ENCODE measurements at regions of chr6 and their contacts with region 1.

Region 1: GRCh38 chr6:33585403-33586107 is 5.5 kb upstream of the BAK1 start:
- DNase-seq: peak; percentile 84 to 94 (median 91)
- ATAC-seq: peak; percentile 65 to 78
- H3K4me3 ChIP-seq: no peak overlapping the region
- H3K27ac ChIP-seq: no peak overlapping the region
- H3K4me1 ChIP-seq: peaks cover 1% of the 10 kb centered on the region
- H3K27me3 ChIP-seq: no peaks in the 10 kb centered on the region

Region 2: DNA sequence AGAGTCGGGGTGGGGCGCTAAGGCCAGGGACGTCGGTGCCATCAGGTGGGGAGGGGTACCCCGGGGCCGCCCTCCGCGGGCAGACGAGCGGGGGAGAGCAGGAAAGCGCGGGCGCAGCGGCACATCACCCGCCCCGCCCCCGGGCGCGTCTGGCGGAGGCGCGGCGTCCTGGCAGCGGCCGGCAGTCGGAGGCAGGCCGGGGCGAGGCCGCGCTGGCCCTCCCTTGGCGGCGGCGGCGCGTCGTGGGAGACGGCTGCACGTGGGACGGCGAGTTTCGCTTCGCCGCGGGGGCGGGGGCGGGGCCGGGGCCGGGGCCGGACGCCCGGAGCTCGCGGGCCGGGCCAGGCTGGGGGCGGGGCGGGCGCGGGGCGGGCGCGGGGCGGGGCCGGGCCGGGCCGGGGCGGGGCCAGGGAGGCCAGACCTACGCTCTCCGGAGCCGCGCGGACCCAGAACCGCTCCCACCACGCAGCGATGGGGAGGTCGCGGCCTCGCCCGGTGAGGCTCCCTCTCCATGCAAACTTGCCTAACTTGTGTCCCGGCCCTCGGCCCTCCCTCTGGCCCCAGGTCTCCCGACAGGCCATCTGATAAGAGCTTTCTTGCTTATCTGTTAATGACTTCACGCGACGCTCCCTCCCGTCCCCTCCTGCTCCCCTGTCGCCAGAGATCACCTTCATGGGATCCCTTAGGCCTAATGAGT is 48.1 kb after region 1 on chr6:
- intact Hi-C with region 1: loop called in 3 of 4 experiments (anchors 5 to 10 kb)
- DNase-seq: peak; percentile 82 to 93 (median 93)
- ATAC-seq: peak; percentile 82 to 85
- H3K4me3 ChIP-seq: peak overlapping the region; percentile 27
- H3K27ac ChIP-seq: peak overlapping the region; percentile 9
- H3K4me1 ChIP-seq: no peaks in the 10 kb centered on the region
- H3K27me3 ChIP-seq: no peaks in the 10 kb centered on the region

Region 3: GRCh38 chr6:33672808-33673207 is 87.3 kb after region 1 on chr6:
- intact Hi-C with region 1: loop called in 2 of 4 experiments (anchors 5 to 10 kb)
- DNase-seq: peak; percentile 92 to 96 (median 94)
- ATAC-seq: peak; percentile 91 to 95
- H3K4me3 ChIP-seq: no peak overlapping the region
- H3K27ac ChIP-seq: no peak overlapping the region
- H3K4me1 ChIP-seq: no peaks in the 10 kb centered on the region
- H3K27me3 ChIP-seq: no peaks in the 10 kb centered on the region

Region 4: DNA sequence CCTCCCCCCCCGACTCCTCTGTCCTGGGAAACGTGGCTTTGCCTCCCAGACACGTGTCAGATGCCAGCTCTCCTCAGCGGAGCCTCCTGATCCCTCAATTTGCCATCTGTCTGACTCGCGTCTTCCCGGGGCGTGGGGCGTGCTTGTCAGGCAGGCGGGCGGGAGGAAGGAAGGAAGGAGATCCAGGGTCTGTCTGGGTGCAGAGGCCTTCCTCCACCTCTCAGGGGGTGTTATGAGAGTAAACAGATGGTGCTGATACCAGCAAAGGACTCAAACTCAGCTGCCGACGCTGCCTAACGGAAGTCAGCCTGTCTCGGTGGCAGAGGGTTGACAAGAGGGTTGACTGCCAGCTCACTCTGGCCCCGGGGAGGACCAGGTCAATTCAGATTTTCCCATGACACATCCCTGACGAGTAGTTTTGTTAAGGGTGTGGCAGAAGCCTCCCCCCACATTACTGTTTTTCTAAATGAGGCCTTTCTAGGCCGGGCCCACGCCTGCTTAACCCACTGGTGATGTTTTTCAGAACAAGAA is 108.9 kb after region 1 on chr6:
- intact Hi-C with region 1: loop called in 3 of 4 experiments (anchors 2 to 10 kb)
- DNase-seq: peak in 2 of 3 donors; percentile 49 to 70
- ATAC-seq: peak in 1 of 2 donors; percentile 42
- H3K4me3 ChIP-seq: no peak overlapping the region
- H3K27ac ChIP-seq: peak overlapping the region; percentile 61
- H3K4me1 ChIP-seq: peaks cover 43% of the 10 kb centered on the region
- H3K27me3 ChIP-seq: no peaks in the 10 kb centered on the region

Region 5: DNA sequence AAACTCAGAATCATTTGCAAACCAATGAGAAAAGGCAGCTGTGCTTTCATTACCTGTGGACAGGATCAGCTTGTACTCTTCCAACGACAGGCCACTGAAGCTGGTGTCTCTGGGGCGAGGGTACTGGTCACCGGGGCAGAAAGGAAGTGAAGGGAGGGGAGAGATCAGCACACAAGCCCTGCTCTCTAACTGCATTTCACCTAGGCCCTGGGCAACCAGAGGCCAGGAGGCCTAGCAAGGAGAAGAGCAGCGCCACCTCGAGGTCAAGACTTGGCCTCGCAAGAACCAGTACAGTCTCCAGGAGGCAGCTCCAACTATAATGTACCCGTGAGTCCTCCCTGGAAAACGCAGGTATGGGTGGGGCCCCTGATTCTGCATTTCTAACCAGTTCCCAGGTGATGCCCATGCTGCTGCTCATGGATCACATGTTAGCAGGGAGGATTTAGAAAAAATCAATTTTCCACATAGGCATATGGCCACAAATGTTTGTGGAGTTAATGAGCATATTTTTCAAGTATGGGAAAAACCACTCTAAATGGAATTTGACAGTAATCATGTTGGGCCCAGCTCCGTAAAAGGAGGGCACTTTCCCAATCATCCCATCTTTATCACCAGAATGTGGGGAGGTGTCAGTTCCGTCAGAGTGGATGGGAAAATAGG is 115.0 kb after region 1 on chr6:
- intact Hi-C with region 1: loop called (anchors 2 to 10 kb)
- DNase-seq: peak; percentile 56 to 84 (median 82)
- ATAC-seq: peak; percentile 23 to 50
- H3K4me3 ChIP-seq: no peak overlapping the region
- H3K27ac ChIP-seq: no peak overlapping the region
- H3K4me1 ChIP-seq: peaks cover 21% of the 10 kb centered on the region
- H3K27me3 ChIP-seq: no peaks in the 10 kb centered on the region

Region 6: GRCh38 chr6:33761922-33762629 is 176.5 kb after region 1 on chr6:
- intact Hi-C with region 1: loop called (anchors 2 to 10 kb)
- DNase-seq: peak; percentile 72 to 91 (median 87)
- ATAC-seq: peak; percentile 77 to 85
- H3K4me3 ChIP-seq: no peak overlapping the region
- H3K27ac ChIP-seq: peak overlapping the region; percentile 31
- H3K4me1 ChIP-seq: peaks cover 4% of the 10 kb centered on the region
- H3K27me3 ChIP-seq: no peaks in the 10 kb centered on the region

Region 7: DNA sequence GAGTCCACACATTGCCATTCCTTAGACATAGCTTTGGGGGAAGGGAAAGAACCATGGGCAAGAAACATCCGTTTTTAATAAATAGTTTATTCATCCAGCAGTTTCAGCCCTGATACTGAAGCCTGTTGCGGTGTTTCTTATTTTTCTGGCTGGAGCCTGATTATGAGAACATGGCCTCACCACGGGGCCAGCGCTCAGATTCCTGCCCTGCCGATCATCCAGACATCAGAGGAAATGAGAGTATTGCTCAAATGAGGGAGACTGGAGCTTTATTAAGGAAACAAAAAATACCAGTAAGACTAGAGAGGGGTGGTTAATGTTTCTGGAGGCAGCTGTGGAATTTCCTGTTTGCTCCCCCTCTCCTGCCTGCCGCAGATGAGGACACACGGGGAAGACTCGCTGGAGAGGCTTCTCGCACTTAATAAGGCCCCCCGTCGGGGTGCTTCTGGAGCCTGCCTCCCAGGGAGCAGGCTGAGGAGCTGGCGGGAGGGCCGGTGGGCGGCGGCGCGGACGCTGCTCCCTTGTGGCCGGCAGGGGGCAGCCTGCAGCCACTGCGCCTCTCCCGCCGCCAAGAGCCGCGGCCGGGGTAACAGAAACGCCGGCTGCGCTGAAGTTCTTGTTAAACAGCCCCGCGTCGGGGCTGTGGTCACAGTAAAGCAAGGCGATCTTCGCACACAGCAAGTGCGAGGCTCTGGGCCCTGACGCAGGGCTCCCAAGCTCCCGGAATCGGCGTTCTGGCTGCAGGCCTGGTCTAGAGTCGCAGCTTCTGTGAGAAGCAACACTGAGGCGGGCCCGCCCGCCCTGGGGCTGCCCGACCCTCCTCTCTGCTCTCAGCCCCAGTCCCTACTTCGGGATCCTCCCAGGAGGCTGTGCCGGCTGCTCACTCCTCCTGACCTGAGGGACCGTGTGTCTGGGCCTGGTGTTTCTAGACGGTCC is 185.9 kb after region 1 on chr6:
- intact Hi-C with region 1: loop called in 2 of 4 experiments (anchors 10 kb)
- DNase-seq: peak; percentile 77 to 91 (median 88)
- ATAC-seq: peak; percentile 78 to 85
- H3K4me3 ChIP-seq: no peak overlapping the region
- H3K27ac ChIP-seq: peak overlapping the region; percentile 3
- H3K4me1 ChIP-seq: peaks cover 3% of the 10 kb centered on the region
- H3K27me3 ChIP-seq: no peaks in the 10 kb centered on the region